HepG2 (cell line): ENCODE measurements at regions of chr3 and their contacts with region 1.

Region 1: DNA sequence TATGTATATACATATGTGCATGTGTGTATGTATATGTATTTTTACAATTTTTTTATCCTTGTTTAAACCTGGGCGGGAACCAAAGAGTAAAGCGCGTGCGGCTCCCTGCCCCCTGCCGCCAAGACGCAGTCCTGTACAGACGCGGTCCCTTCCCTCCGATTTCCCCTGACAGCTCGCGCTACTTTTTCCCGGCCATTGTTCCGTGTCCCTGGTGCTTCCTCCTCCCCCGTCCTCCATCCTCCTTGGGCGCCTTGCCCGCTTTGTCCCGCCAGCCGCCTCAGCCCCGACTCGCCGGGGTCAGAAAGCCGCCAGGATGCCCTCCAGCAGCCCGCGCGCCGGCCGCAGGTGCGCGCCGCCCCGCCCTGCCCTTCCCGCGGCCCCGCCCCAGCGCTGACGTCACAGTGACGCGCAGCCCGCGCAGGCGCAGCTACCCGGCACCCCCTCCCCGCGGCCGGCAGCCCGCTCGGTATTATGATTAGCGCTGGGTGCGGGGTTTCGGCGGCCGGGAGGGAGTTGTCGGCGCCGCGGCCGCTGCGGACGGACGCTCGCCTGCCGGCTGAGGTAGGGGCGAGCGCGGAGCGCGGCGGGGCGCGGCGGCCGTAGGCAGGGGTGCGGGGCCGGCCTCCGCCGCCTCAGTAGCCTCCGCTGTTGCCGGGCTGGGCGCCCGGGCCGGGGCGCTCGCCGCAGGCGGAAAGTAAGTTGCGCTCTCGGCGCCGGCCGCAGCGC is at the start of gene SNRK:
- DNase-seq: peak; percentile 53
- ATAC-seq: peak; percentile 76
- H3K4me3 ChIP-seq: peak within 1 kb of the TSS; percentile 81 to 96 (median 94)
- H3K27ac ChIP-seq: peak within 1 kb of the TSS; percentile 79
- H3K4me1 ChIP-seq: peaks cover 34% of the 10 kb centered on the region
- H3K27me3 ChIP-seq: peaks cover 0 to 9% of the 10 kb centered on the region in 2 experiments; a peak in 2 of 5 replicates
- CTCF ChIP-seq: peak; percentile 39
- EP300 ChIP-seq: no peak
- POLR2A ChIP-seq: peak; percentile 34 to 53; a peak in 2 of 4 replicates
- RAD21 ChIP-seq: peak; percentile 42; the same call in 1 of the 2 replicates
- total RNA-seq, gene SNRK: 11.4 and 14.2 TPM in 2 replicates

Region 2: GRCh38 chr3:43248185-43248583 is 38.1 kb before region 1 on chr3:
- CTCF ChIA-PET with region 1: no interaction called
- POLR2A ChIA-PET with region 1: no interaction called
- in situ Hi-C with region 1: no loop called
- intact Hi-C with region 1: no loop called
- DNase-seq: no peak
- ATAC-seq: no peak
- H3K4me3 ChIP-seq: no peak overlapping the region
- H3K27ac ChIP-seq: no peak overlapping the region
- H3K4me1 ChIP-seq: no peaks in the 10 kb centered on the region
- H3K27me3 ChIP-seq: peaks cover 0 to 15% of the 10 kb centered on the region in 2 experiments; a peak in 2 of 5 replicates
- CTCF ChIP-seq: no peak
- EP300 ChIP-seq: no peak
- POLR2A ChIP-seq: no peak
- RAD21 ChIP-seq: no peak

Region 3: GRCh38 chr3:43317461-43318316 is 31.4 kb after region 1 on chr3:
- CTCF ChIA-PET with region 1: no interaction called
- POLR2A ChIA-PET with region 1: interaction called, 8 read pairs
- in situ Hi-C with region 1: no loop called
- intact Hi-C with region 1: loop called (anchors 2 kb)
- DNase-seq: peak; percentile 70
- ATAC-seq: peak; percentile 48
- H3K4me3 ChIP-seq: peak overlapping the region; percentile 8 to 62 (median 31); a peak in 4 of 6 replicates
- H3K27ac ChIP-seq: peak overlapping the region; percentile 97
- H3K4me1 ChIP-seq: peaks cover 76% of the 10 kb centered on the region
- H3K27me3 ChIP-seq: no peaks in the 10 kb centered on the region
- CTCF ChIP-seq: no peak
- EP300 ChIP-seq: peak in 1 of 2 experiments; percentile 39; a peak in 2 of 4 replicates
- POLR2A ChIP-seq: no peak
- RAD21 ChIP-seq: no peak

Region 4: DNA sequence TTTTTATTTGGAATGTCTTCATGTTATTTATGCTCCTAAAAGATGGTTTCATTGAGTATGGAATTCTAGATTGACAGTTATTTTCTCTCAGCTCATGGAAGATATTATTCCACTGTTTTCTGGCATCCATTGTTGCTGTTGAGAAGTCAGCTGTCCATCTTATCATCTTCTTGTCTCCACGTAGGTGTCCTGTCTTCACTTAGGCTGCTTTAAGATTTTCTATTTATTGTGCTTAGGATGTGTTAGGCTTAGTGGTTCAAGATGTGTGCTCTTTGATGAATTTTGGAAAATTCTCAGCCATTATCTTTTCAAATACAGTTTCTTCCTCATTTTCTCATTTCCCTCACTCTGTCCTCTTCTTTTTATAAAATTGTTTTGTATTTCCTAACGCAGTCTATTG is 52.0 kb after region 1 on chr3:
- CTCF ChIA-PET with region 1: no interaction called
- POLR2A ChIA-PET with region 1: no interaction called
- in situ Hi-C with region 1: no loop called
- intact Hi-C with region 1: loop called (anchors 5 kb)
- DNase-seq: no peak
- ATAC-seq: no peak
- H3K4me3 ChIP-seq: no peak overlapping the region
- H3K27ac ChIP-seq: no peak overlapping the region
- H3K4me1 ChIP-seq: no peaks in the 10 kb centered on the region
- H3K27me3 ChIP-seq: no peaks in the 10 kb centered on the region
- CTCF ChIP-seq: no peak
- EP300 ChIP-seq: no peak
- POLR2A ChIP-seq: no peak
- RAD21 ChIP-seq: no peak

Region 5: GRCh38 chr3:43540624-43541023 is 254.3 kb after region 1 on chr3:
- CTCF ChIA-PET with region 1: no interaction called
- POLR2A ChIA-PET with region 1: no interaction called
- in situ Hi-C with region 1: no loop called
- intact Hi-C with region 1: no loop called
- DNase-seq: no peak
- ATAC-seq: no peak
- H3K4me3 ChIP-seq: no peak overlapping the region
- H3K27ac ChIP-seq: no peak overlapping the region
- H3K4me1 ChIP-seq: peaks cover 8% of the 10 kb centered on the region
- H3K27me3 ChIP-seq: no peaks in the 10 kb centered on the region
- CTCF ChIP-seq: no peak
- EP300 ChIP-seq: no peak
- POLR2A ChIP-seq: no peak
- RAD21 ChIP-seq: no peak